Heart left ventricle (tissue), 16 donors: ENCODE measurements at regions of chr15 and their contacts with region 1.

Region 1: GRCh38 chr15:82689147-82689546 is 20.5 kb downstream of the AP3B2 start:
- DNase-seq: no peak
- ATAC-seq: no peak
- H3K4me3 ChIP-seq: no peak overlapping the region
- H3K27ac ChIP-seq: no peak overlapping the region
- H3K4me1 ChIP-seq: no peaks in the 10 kb centered on the region
- H3K27me3 ChIP-seq: peaks cover 0 to 1% (median 0%) of the 10 kb centered on the region in 9 donors
- CTCF ChIP-seq: no peak
- POLR2A ChIP-seq: no peak

Region 2: DNA sequence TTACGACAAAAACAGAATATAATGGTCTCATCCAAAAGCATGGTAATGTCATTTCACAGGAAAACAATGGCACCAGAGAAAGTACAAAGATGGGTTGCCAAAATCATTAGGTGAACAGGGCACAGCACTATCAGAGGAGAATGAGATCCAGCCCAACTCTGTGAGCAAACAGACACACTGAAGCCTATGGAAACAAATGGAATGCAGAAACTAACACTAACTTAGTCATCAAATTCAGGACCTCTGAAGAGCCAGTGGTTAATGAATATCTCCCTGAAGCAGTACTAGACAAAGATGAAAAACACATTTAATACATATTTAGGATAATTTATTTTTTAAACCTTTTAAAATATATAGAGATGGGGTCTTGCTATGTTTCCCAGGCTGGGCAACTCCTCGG is 134.3 kb before region 1 on chr15:
- intact Hi-C with region 1: loop called in 1 of 10 experiments (anchors 5 kb)
- DNase-seq: no peak
- ATAC-seq: no peak
- H3K4me3 ChIP-seq: no peak overlapping the region
- H3K27ac ChIP-seq: no peak overlapping the region
- H3K4me1 ChIP-seq: no peaks in the 10 kb centered on the region
- H3K27me3 ChIP-seq: no peaks in the 10 kb centered on the region
- CTCF ChIP-seq: no peak
- POLR2A ChIP-seq: no peak

Region 3: DNA sequence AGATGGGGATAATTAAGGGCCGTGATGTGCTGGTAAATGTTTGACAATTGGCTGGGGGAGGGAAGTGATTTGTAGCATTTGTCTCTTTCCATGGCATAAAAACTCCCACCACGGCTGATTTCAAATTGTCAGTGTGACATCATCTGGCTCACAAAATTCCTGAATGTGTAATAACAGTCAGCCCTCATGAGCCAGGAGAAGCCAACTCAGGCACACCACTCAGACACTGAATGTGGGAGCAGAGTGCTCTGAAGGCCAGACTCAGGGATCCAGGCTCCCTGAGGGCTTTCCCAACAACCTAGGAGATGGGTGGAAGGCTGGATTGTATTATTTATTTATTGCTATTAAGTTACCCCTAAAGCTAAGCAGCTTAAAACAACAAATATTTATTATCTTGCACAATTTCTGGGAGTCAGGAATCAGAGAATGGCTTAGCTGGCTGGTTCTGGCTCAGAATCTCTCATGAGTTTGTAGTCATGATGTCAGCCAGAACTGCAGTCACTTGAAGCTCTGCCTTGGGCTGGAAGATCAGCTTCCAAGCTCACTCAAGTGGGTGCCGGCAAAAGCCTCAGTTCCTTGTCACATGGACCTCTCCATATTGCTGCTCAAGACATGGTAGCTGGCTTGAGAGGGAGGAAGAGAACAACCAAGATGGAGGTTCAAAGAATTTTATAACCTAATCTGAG is 35.5 kb before region 1 on chr15:
- intact Hi-C with region 1: no loop called
- DNase-seq: no peak
- ATAC-seq: no peak
- H3K4me3 ChIP-seq: no peak overlapping the region
- H3K27ac ChIP-seq: no peak overlapping the region
- H3K4me1 ChIP-seq: no peaks in the 10 kb centered on the region
- H3K27me3 ChIP-seq: peaks cover 0 to 17% (median 0%) of the 10 kb centered on the region in 9 donors
- CTCF ChIP-seq: no peak
- POLR2A ChIP-seq: no peak